Vagina (tissue), 2 donors: ENCODE measurements at regions of chr1 and their contacts with region 1.

Region 1: DNA sequence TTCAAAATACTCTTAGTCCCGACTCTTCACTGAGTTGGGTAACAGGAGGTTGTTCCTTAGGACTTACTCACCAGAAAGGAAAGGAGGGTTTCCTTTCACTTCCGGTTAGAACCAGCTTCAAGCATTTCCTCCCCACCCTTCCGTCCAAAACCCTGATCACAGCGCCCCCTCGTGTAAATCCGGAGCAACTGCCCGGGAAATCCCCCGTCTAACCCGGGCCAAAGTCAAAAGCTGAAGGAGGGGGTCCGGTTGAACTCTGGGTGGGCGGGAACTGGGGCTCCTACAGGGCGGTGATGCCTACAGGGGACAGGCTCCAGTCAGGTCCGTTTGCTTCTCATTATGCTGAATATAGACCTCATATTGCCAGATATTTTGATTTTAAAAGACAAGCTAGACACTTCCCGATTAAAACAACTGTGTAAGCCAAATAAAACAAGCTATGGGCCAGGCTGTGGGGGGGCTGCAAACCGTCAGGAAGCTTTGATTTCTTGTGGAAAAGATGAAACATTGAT is 15.0 kb upstream of the MTARC2 start:
- DNase-seq: no peak
- H3K4me3 ChIP-seq: peak overlapping the region; percentile 15 to 29
- H3K27ac ChIP-seq: peak overlapping the region; percentile 17
- H3K4me1 ChIP-seq: no peaks in the 10 kb centered on the region
- H3K27me3 ChIP-seq: no peaks in the 10 kb centered on the region
- CTCF ChIP-seq: peak; percentile 39 to 86 (median 83)
- POLR2A ChIP-seq: no peak

Region 2: DNA sequence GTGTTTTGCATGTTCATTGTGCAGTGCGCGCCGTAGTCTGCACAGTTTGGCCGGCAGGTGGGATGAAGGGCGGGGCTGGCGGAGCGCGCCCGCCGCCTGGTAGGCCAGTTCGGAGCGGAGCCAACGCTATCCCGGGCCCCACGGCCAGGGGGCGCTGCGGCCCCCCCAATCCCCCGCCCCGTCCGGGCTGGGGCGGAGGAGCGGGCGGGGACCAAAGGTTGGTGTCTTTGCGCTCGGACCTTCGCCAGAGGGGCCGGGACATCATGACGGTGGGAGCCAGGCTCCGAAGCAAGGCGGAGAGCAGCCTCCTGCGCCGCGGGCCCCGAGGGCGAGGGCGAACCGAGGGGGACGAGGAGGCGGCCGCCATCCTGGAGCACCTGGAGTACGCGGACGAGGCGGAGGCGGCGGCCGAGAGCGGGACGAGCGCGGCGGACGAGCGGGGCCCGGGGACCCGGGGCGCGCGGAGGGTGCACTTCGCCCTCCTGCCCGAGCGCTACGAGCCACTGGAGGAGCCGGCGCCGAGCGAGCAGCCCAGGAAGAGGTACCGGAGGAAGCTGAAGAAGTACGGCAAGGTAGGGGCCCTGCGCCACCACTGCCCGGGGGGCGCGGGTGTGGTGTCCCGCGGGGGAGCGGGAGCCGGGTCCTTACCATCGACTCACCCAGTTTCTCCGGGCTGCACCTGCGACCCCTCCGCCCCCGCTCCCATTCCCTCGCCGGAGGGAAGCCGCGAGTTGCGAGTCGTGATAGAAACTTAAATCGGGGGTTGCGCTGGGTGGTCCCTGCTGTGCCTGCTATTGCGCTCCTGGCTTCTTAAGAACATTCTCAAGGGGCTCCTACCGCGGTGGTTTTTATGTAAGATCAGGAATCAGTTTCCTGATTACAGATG is 42.8 kb before region 1 on chr1 and contains the start of gene C1orf115:
- intact Hi-C with region 1: loop called (anchors 5 kb)
- DNase-seq: no peak
- H3K4me3 ChIP-seq: peak within 1 kb of the TSS; percentile 65 to 71
- H3K27ac ChIP-seq: peak within 1 kb of the TSS; percentile 65
- H3K4me1 ChIP-seq: no peaks in the 10 kb centered on the region
- H3K27me3 ChIP-seq: no peaks in the 10 kb centered on the region
- CTCF ChIP-seq: peak; percentile 78 to 92 (median 84)
- POLR2A ChIP-seq: no peak
- total RNA-seq, gene C1orf115: 11.0 TPM

Region 3: DNA sequence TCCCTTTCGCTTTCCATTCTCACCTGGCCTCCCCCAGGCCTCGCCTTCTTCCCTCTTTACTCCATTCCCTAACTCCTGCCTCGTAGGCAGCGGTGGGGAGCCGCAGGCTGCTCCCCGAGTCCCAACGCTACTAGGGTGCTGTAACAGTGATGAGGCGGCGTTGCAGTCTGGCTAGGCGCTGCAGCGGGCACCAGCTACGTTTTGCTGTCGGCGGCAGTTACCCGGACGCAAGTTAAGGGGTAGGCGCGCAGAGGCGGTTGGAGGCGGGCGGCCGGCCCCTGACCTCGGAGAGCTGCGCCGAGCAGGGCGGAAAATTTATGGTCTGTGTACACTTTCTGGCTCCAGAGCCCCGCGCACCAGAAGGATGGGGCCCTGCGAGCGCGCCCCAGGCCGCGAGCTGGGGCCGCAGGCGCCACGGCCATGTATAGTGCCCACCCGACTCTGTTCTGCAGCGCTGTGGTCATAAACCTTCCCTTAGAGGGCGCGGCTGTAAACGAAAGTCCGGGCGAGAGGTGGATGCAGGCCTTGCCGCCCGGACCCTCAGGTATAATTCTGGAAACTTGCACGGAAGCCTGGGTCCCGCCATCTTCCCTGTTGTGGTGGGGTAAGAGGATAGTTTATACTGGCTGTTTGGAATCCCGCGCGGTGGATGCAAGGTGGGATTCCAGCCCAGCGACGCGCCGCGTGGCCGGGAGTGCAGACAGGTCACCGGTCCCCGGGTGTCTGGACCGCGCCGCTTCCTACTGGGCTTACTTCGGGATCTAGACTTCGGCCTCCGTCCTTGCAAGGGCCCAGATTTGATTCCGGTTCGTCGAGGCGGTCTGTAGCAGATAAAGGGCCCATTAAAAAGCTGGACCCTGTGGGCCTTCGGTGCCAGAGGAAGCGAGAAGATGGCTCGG is 161.1 kb after region 1 on chr1:
- intact Hi-C with region 1: loop called (anchors 5 kb)
- DNase-seq: peak in 1 of 2 donors; percentile 80
- H3K4me3 ChIP-seq: peak overlapping the region; percentile 11 to 39
- H3K27ac ChIP-seq: no peak overlapping the region
- H3K4me1 ChIP-seq: peaks cover 12% of the 10 kb centered on the region
- H3K27me3 ChIP-seq: peaks cover 20% of the 10 kb centered on the region
- CTCF ChIP-seq: no peak
- POLR2A ChIP-seq: no peak